ENCODE measurements at regions of chr17 and their contacts with region 1.

Region 1: DNA sequence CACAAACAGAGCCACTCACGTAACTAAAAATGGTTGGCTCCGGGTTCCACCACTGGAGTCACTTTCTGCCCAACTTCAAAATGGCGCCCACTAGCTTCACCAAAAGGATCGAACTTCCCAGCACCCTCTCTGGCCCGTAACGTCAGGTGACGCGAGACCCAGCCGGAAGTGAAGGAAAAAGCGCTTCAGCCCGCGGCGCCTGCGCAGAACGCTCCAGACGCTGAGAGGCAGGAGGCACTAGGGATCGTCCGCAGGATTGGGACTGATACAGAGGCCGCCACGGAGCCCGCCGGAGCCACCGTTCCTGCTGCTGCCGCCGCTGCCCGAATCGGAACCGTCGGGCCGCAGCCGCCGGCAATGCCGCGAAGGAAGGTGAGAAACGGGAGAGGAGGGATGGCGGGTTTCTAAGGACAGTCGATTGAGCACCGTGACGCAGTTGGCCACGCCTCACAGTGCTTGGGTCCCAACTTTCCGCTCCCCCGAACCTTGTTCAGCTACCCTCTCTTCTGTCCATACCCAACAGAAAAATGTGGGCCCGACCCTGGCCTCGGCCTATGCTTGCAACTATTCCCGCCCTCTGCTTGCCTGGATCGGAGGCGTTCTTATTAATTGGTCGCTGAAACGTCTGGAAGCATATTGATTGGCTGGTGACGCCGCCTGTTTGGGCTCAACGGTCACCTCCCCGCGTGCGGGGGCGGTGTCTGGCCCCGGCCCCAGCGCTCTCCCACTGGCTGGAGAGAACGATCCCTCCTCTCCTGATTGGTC is at the start of gene KAT7:
- DNase-seq: peak; percentile 97
- CTCF ChIP-seq: no peak

Region 2: GRCh38 chr17:49677933-49678847 is 110.5 kb before region 1 on chr17 and contains the start of gene SPOP:
- CTCF ChIA-PET with region 1: no interaction called
- POLR2A ChIA-PET with region 1: interaction called, 13 read pairs
- DNase-seq: peak; percentile 98
- CTCF ChIP-seq: no peak

Region 3: DNA sequence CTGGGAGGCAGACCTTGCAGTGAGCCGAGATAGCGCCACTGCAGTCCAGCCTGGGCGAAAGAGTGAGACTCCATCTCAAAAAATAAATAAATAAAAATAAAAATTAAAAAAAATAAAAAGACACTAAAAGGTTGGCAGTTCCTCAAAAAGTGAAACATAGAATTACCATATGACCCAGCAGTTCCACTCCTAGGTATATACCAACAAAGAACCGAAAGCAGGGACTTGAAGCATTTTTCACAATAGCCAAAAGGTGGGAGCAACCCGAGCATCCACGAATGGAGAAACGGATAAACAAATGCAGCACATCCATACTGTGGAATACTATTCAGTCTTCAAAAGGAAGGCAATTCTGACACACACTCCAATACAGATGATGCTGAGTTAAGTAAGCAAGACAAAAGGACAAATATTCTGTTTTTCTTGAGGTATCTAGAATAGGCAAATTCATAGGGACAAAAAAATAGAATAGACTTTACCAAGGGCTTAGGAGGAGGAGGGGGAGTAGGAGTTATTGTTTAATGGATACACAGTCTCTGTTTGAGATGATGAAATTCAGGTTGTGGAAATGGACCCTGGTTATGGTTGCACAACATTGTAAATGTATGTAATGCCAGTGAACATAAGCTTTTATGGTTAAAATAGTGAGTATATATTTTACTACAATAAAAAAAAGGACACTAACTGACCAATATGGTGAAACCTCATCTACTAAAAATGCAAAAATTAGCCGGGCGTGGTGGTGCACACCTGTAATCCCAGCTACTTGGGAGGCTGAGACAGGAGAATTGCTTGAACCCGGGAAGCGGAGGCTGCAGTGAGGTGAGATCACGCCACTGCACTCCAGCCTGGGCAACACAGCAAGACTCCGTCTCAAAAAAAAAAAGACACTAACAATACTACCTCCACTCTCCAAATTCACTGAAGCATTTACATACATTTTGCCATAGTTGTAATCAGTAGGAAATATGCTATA is 53.9 kb before region 1 on chr17:
- CTCF ChIA-PET with region 1: no interaction called
- POLR2A ChIA-PET with region 1: no interaction called
- DNase-seq: no peak
- CTCF ChIP-seq: no peak

Region 4: DNA sequence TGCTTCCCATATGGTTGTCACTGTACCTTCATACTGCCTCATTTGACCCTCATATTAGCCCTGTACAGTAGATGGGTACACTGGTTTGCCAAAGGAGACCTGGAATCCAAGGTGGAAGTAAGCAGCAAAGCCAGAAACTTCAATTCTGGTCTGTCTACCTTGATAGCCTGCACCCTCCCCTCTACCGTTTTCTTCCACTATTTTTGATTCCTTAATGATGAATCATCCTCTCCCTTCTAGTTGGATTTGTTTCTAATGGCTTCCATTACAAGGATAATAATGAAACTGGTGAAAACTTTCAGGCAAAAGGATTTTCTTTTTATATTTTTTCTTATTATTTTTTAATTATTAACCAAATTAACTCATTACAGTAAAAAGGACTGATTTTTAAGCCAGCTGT is 41.9 kb after region 1 on chr17:
- CTCF ChIA-PET with region 1: no interaction called
- POLR2A ChIA-PET with region 1: interaction called, 10 read pairs
- DNase-seq: no peak
- CTCF ChIP-seq: no peak

Region 5: DNA sequence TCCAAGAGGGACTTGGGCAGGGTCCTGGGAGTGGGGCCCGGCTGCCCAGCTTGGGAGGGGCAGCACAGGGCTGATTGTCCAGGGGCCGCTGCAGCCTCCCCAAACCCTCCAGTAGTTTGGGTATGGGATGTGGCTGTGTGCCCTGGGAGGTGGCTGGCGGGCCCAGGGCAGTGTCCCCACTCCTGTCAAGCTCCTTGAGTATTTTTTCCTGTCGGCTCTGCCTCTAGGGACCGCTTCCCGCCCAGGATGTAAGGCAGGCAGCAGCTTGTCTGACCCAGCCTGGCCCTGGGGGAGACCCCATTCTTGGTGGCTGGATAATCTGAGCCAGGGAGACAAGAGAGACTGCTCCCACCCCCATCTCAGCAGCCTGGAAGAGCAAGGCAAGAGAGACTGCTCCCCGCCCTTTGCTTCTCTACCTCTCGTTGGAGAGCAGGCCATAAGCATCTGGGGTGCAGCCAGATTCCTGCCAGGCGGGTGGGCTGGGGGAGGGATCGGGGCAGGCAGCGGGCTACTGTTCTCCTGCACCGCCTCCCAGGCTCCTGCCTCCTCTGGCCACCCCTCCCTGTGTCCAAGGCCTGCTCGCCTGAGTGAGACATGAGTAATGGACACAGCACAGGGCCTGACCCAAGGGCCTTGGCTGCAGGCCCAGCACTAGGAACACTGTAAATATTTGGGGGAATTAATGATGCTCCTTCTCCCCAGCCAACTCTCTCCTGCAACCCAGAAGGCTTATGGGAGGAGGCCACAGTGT is 248.8 kb after region 1 on chr17:
- CTCF ChIA-PET with region 1: no interaction called
- POLR2A ChIA-PET with region 1: no interaction called
- DNase-seq: no peak
- CTCF ChIP-seq: no peak